ENCODE measurements at regions of chr12 and their contacts with region 1.

Region 1: DNA sequence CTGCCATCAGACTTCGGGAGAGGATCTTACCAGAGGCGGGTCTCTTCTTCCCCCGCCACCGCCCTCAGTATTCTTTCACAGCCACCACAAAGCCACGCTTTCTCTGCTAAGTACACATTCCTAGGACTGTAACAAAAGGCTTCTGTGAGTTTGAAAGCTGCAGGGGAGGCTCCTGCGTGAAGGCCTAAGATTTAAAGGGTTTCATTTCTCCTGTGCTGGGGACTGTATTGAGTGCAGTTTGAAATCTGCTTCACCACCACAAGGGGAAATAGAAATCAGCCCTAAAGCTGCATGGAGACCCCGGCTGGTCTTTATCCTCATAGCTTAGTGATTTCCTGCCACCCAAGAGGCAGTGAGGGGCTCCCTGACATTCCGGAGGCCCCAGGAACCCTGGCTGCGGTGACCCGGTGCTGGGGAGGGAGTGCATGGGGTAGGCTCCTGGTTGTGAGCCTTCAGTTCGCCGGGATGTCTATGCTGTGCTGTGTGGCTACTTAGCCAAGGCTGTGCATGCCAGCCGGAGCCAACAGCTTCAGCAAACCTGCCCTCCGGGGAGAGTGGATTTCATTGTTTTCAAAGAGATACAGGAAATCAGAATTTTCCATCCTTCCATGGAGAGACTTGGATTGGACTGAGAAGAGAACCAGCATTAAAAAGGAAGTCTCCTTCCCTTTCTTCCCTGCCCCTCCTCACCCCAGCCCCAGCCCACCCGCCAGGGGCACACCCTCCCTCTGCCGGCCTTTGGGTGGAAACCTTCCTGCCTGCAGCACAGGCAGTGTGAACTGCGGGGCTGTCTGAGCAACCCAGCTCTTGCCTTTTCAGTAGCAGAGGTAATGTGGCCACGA is 163.3 kb downstream of the ETV6 start:
- H3K4me3 Mint-ChIP-seq: peak overlapping the region; percentile 73
- H3K27ac Mint-ChIP-seq: peak overlapping the region; percentile 88
- H3K4me1 Mint-ChIP-seq: peaks cover 81% of the 10 kb centered on the region
- H3K27me3 Mint-ChIP-seq: no peaks in the 10 kb centered on the region

Region 2: DNA sequence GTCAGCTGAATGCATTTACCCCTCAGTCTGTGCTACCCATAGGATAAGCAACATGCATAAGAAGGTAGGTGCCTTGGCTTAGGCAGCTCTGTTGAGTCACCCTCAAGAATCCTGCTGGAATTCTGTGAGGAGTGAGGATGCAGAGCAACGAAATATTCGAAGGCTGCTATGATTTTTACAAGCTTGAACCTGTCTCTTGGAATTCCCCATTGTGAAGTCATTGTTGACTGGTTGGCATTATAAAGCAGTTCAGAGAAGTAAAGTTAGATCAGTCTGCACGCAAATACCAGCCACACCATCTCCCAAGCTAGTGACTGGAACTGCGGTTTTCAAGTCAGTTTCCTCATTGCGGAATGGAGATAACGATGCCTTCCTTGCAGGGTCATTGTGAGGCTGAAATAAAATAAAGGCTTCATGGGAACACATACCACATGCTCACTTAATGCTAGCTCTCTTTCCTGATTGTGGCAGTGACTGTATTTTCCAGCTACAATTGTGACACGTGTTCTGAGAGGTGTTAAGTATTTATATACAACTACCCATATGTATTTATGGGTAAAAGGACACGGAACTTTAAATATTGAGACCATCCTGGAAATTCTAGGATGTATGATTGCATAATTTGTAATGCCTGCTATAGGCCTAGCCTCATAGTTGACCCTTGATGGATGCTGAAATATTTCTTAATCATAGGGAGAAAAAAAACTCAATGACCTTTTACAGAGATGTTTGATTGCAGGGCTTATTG is 66.6 kb before region 1 on chr12:
- intact Hi-C with region 1: loop called (anchors 2 kb)
- H3K4me3 Mint-ChIP-seq: peak overlapping the region; percentile 44
- H3K27ac Mint-ChIP-seq: peak overlapping the region; percentile 94
- H3K4me1 Mint-ChIP-seq: peaks cover 81% of the 10 kb centered on the region
- H3K27me3 Mint-ChIP-seq: no peaks in the 10 kb centered on the region

Measured in dendritic cell treated with granulocyte-macrophage colony-stimulating factor and Interleukin-4, amounts not matched to agents 40 ng/mL and 50 ng/mL, for 4 days (primary cell).